Naive thymus-derived CD4-positive, alpha-beta T cell (primary cell): ENCODE measurements at regions of chr17 and their contacts with region 1.

Region 1: DNA sequence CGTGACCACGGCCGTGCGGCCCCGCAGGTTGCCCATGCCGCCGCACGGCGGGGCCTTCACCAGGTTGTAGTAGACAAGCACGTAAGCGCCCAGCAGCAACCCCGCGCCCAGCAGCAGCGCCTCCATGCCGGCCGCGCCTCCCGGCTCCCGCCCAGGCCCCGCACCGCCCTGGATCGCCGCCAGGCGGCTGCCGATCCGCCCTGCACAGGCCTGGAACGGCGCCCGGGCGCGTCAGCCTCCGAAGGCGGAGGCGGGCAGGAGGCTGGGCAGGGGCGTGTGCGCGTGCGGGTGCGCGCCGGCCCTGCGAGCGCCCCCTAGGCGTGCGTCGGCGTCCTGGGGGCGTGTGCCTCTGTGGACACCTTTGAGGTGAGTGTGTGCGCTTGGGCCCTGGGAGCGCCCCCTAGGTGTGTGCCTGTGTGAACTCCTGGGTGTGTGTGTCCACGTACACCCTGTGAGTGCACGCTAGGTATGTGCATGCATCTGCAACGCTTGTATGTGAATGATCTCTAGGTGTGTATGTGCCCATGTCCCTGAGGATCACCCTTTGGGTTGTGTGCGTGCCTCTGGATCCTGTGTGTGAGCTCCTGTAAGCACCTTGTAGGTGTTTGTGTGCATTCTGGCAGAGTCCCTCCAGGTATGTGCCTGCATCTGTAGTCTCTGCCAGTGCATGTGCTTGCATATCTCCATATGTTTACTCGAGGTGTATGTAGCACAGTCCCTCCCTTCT is at the start of gene DHRS13:
- DNase-seq: peak; percentile 92 to 99 (median 96)
- ATAC-seq: peak; percentile 96
- H3K4me3 ChIP-seq: peak within 1 kb of the TSS; percentile 77
- H3K4me3 Mint-ChIP-seq: peak within 1 kb of the TSS; percentile 85 to 98 (median 94)
- H3K27ac ChIP-seq: peak within 1 kb of the TSS; percentile 87
- H3K27ac Mint-ChIP-seq: peak within 1 kb of the TSS; percentile 81 to 96 (median 90)
- H3K4me1 ChIP-seq: peaks cover 18 to 29% of the 10 kb centered on the region in 2 donors
- H3K4me1 Mint-ChIP-seq: peaks cover 13 to 53% (median 36%) of the 10 kb centered on the region in 7 donors
- H3K27me3 ChIP-seq: no peaks in the 10 kb centered on the region
- H3K27me3 Mint-ChIP-seq: no peaks in the 10 kb centered on the region
- total RNA-seq, gene DHRS13: 20.0 to 51.3 (median 30.4) TPM

Region 2: GRCh38 chr17:28634206-28634856 is 268.7 kb before region 1 on chr17:
- CTCF ChIA-PET with region 1: no interaction called
- POLR2A ChIA-PET with region 1: no interaction called
- intact Hi-C with region 1: no loop called
- DNase-seq: no peak
- ATAC-seq: no peak
- H3K4me3 ChIP-seq: no peak overlapping the region
- H3K4me3 Mint-ChIP-seq: no peak overlapping the region
- H3K27ac ChIP-seq: no peak overlapping the region
- H3K27ac Mint-ChIP-seq: peak overlapping the region in 2 of 9 donors; percentile 25 to 34
- H3K4me1 ChIP-seq: no peaks in the 10 kb centered on the region
- H3K4me1 Mint-ChIP-seq: peaks cover 15 to 44% (median 33%) of the 10 kb centered on the region in 7 donors
- H3K27me3 ChIP-seq: no peaks in the 10 kb centered on the region
- H3K27me3 Mint-ChIP-seq: no peaks in the 10 kb centered on the region

Region 3: DNA sequence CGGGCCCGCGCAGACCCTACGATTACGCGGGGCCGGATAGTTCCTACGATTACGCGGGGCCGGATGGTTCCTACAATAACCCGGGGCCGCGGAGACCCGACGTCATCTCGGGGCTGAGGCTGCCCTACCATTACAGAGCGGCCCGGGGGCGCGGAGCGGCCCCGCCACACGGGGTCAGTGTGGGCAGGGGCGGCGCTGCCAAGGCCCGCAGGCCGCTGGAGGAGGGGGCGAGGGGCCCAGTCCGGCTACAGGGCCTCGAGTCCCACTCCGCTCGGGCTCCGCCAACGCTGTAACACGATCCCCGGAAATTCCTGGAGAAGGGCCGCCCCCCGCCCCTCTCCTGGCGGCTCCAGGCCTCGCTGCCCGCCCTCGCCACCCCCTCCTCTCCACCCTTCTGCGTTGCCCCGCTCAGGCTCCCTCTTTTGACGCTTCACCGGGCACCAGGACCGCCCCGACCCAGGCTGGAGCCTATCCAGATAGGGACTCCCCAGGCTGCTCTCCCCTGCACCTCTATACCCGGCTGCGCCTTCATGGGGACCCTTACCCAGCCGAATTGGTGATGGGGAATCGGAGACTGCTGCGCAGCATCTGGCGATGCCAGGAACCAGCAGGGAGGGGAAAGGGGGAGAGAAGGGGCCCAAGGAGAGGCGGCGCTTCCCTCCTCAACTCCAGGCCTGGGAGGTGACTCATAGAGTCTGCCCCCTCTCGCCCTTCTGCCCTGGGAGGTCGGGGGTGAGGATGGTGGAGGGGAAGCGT is 185.2 kb before region 1 on chr17 and contains the start of gene RAB34:
- CTCF ChIA-PET with region 1: no interaction called
- POLR2A ChIA-PET with region 1: interaction called, 8 read pairs
- intact Hi-C with region 1: loop called in 1 of 2 experiments (anchors 2 kb)
- DNase-seq: peak in 2 of 9 donors; percentile 18 to 21
- ATAC-seq: no peak
- H3K4me3 ChIP-seq: no peak within 1 kb of the TSS
- H3K4me3 Mint-ChIP-seq: peak within 1 kb of the TSS; percentile 58 to 99 (median 76)
- H3K27ac ChIP-seq: peak within 1 kb of the TSS; percentile 52
- H3K27ac Mint-ChIP-seq: peak within 1 kb of the TSS; percentile 59 to 97 (median 85)
- H3K4me1 ChIP-seq: peaks cover 26 to 30% of the 10 kb centered on the region in 2 donors
- H3K4me1 Mint-ChIP-seq: peaks cover 17 to 57% (median 35%) of the 10 kb centered on the region in 7 donors
- H3K27me3 ChIP-seq: no peaks in the 10 kb centered on the region
- H3K27me3 Mint-ChIP-seq: peaks cover 0 to 24% (median 6%) of the 10 kb centered on the region in 5 donors
- total RNA-seq, gene RAB34: 11.0 to 50.2 (median 16.4) TPM

Region 4: DNA sequence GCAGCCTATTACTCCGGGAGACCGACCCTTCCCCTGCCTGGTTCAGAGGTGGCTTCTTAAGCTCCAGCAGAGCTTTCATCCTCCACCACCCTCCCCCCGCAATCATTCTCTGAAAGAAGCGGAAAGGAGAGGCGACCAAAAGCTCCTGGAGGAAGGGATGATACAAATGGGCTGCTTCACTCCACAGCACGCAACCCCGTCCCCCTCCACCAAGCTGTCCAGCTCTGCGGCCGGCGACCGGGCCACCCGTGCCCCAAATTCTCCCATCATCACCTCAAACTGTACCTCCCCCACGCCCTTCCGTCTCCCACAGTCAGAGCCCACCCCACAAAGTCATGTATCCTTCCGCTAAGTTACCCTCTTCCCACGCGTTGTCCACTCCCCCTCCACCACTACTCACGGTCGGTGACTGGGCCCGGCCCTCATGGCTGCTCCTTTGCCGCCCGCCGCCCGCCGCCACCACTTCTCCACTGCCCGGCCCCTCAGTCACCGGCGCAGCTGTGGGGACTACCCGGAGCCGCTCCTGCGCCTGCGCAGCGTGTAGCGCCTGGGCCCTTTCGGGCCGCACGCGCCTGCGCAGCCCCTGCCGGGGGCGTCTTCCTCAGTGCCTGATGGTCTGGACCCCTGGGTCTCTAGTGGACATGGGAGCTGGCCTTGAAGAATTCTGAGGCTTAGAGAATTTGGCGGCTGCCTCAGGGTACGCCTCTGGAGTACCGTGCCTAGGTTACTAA is 60.5 kb before region 1 on chr17 and contains the start of gene FAM222B:
- CTCF ChIA-PET with region 1: interaction called, 5 read pairs
- POLR2A ChIA-PET with region 1: interaction called, 22 read pairs
- intact Hi-C with region 1: loop called in 1 of 2 experiments (anchors 1 kb)
- DNase-seq: peak; percentile 80 to 91 (median 86)
- ATAC-seq: peak; percentile 98
- H3K4me3 ChIP-seq: peak within 1 kb of the TSS; percentile 77
- H3K4me3 Mint-ChIP-seq: peak within 1 kb of the TSS; percentile 96 to 100 (median 98)
- H3K27ac ChIP-seq: peak within 1 kb of the TSS; percentile 78
- H3K27ac Mint-ChIP-seq: peak within 1 kb of the TSS; percentile 83 to 97 (median 92)
- H3K4me1 ChIP-seq: peaks cover 8 to 13% of the 10 kb centered on the region in 2 donors
- H3K4me1 Mint-ChIP-seq: peaks cover 6 to 31% (median 26%) of the 10 kb centered on the region in 7 donors
- H3K27me3 ChIP-seq: no peaks in the 10 kb centered on the region
- H3K27me3 Mint-ChIP-seq: no peaks in the 10 kb centered on the region
- total RNA-seq, gene FAM222B: 16.5 to 24.4 (median 22.3) TPM

Region 5: GRCh38 chr17:28854457-28855350 is 48.3 kb before region 1 on chr17 and contains the start of gene ERAL1:
- CTCF ChIA-PET with region 1: interaction called, 10 read pairs
- POLR2A ChIA-PET with region 1: interaction called, 19 read pairs
- intact Hi-C with region 1: loop called (anchors 1 kb)
- DNase-seq: peak; percentile 63 to 87 (median 83)
- ATAC-seq: peak; percentile 100
- H3K4me3 ChIP-seq: peak within 1 kb of the TSS; percentile 86
- H3K4me3 Mint-ChIP-seq: peak within 1 kb of the TSS; percentile 90 to 100 (median 94)
- H3K27ac ChIP-seq: peak within 1 kb of the TSS; percentile 82
- H3K27ac Mint-ChIP-seq: peak within 1 kb of the TSS; percentile 85 to 94 (median 90)
- H3K4me1 ChIP-seq: peaks cover 7 to 12% of the 10 kb centered on the region in 2 donors
- H3K4me1 Mint-ChIP-seq: peaks cover 0 to 27% (median 11%) of the 10 kb centered on the region in 7 donors
- H3K27me3 ChIP-seq: no peaks in the 10 kb centered on the region
- H3K27me3 Mint-ChIP-seq: no peaks in the 10 kb centered on the region
- total RNA-seq, gene ERAL1: 19.8 to 50.0 (median 24.9) TPM

Region 6: GRCh38 chr17:28916302-28916934 is 13.4 kb after region 1 on chr17:
- CTCF ChIA-PET with region 1: interaction called, 3 read pairs
- POLR2A ChIA-PET with region 1: no interaction called
- intact Hi-C with region 1: loop called in 1 of 2 experiments (anchors 1 kb)
- DNase-seq: peak in 6 of 9 donors; percentile 38 to 50 (median 42)
- ATAC-seq: peak; percentile 90
- H3K4me3 ChIP-seq: no peak overlapping the region
- H3K4me3 Mint-ChIP-seq: no peak overlapping the region
- H3K27ac ChIP-seq: peak overlapping the region; percentile 46
- H3K27ac Mint-ChIP-seq: peak overlapping the region in 7 of 9 donors; percentile 46 to 93 (median 65)
- H3K4me1 ChIP-seq: no peaks in the 10 kb centered on the region
- H3K4me1 Mint-ChIP-seq: peaks cover 0 to 9% (median 6%) of the 10 kb centered on the region in 7 donors
- H3K27me3 ChIP-seq: no peaks in the 10 kb centered on the region
- H3K27me3 Mint-ChIP-seq: no peaks in the 10 kb centered on the region

Region 7: DNA sequence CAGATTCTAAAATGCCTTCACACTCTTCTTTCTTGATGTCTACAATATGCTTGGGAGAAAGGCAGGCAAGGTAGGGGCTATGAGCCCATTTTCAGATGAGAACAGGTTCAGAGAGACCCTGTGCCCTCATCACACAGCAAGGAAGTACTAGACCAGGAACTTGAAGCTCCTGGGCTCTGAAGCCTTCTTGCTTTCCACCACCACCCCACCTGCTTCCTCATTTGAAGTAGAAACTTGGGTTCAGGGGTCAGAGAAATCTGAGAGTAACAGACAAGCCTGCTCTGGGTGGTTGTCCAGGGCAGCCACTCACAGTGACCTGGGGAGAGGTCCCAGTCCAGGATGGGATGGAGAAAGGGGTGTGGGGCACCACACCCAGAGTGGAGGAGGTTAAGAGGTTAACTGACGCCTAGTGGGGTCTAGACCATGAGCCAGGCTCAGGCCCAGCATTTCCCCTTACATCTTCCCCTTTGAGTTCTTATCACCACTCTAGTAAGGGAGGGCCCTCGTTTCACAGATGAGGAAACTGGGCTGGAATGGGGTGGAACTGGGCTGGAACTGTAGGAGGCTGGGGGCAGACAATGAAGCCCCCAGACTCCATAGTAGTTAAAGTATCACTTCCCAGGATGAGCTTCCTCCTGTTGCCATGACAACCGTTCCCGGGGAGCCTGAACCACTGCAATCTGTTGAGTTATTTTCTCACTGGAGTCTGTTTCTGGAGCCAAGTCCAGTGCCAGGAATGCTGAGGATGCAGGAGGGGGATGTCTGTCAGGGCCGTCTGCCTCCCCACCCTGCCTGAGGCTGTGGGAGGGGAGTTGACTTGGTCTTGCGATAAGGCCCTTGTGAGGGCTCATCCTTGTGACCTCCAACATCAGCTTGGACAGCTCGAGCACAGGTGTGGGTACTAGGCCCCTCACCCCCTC is 64.5 kb after region 1 on chr17:
- CTCF ChIA-PET with region 1: no interaction called
- POLR2A ChIA-PET with region 1: no interaction called
- intact Hi-C with region 1: no loop called
- DNase-seq: no peak
- ATAC-seq: peak; percentile 71
- H3K4me3 ChIP-seq: no peak overlapping the region
- H3K4me3 Mint-ChIP-seq: no peak overlapping the region
- H3K27ac ChIP-seq: no peak overlapping the region
- H3K27ac Mint-ChIP-seq: peak overlapping the region in 1 of 9 donors; percentile 14
- H3K4me1 ChIP-seq: no peaks in the 10 kb centered on the region
- H3K4me1 Mint-ChIP-seq: peaks cover 0 to 6% (median 0%) of the 10 kb centered on the region in 7 donors
- H3K27me3 ChIP-seq: no peaks in the 10 kb centered on the region
- H3K27me3 Mint-ChIP-seq: peaks cover 4 to 11% (median 9%) of the 10 kb centered on the region in 5 donors

Region 8: GRCh38 chr17:29024316-29024952 is 121.5 kb after region 1 on chr17:
- CTCF ChIA-PET with region 1: no interaction called
- POLR2A ChIA-PET with region 1: no interaction called
- intact Hi-C with region 1: no loop called
- DNase-seq: no peak
- ATAC-seq: no peak
- H3K4me3 ChIP-seq: no peak overlapping the region
- H3K4me3 Mint-ChIP-seq: no peak overlapping the region
- H3K27ac ChIP-seq: no peak overlapping the region
- H3K27ac Mint-ChIP-seq: no peak overlapping the region
- H3K4me1 ChIP-seq: peaks cover 2 to 6% of the 10 kb centered on the region in 2 donors
- H3K4me1 Mint-ChIP-seq: peaks cover 0 to 10% (median 2%) of the 10 kb centered on the region in 7 donors
- H3K27me3 ChIP-seq: peaks cover 4 to 10% of the 10 kb centered on the region in 2 donors
- H3K27me3 Mint-ChIP-seq: peaks cover 28 to 60% (median 46%) of the 10 kb centered on the region in 5 donors

Region 9: DNA sequence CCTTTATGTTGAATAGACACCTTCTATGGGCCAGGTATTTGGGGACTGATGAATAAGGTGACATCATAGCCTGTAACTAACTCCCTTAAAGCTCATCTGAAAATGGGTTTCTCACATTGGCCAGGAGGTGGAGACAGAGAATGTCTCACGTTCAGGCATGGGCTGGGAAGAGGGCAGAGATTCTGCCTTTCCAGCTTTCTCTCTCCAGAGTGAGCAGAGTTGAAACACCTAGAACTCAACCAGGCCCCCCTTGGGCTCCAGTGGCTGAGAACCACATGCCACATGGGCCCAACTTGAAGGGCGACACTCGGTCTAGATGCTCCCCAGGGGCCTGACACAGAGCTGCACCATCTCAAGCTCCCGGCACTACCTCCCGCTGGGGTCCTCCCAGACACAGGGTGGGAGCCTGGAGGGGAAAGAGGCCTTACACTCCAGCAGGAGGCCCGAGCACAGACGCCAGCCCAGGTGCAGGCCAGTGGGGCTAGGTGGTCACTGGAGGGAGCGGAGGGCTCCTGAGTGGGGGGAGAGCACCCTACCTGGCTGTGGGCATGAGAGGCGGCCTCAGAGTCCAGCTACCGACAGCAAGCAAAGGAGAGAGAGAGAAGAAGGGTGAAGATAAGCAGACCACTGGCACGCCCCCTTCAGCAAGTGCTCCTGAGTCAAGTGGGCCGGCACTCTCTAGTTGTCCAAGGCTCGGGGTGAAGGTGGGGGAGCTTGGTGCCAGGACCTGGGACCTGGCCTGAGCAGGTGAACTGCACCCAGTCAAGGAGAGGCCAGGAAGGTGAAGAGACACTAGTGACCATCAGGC is 221.3 kb after region 1 on chr17:
- CTCF ChIA-PET with region 1: interaction called, 11 read pairs
- POLR2A ChIA-PET with region 1: no interaction called
- intact Hi-C with region 1: no loop called
- DNase-seq: peak in 6 of 9 donors; percentile 34 to 59 (median 48)
- ATAC-seq: peak; percentile 87
- H3K4me3 ChIP-seq: no peak overlapping the region
- H3K4me3 Mint-ChIP-seq: no peak overlapping the region
- H3K27ac ChIP-seq: no peak overlapping the region
- H3K27ac Mint-ChIP-seq: peak overlapping the region in 2 of 9 donors; percentile 54 to 55
- H3K4me1 ChIP-seq: no peaks in the 10 kb centered on the region
- H3K4me1 Mint-ChIP-seq: peaks cover 0 to 16% (median 5%) of the 10 kb centered on the region in 7 donors
- H3K27me3 ChIP-seq: no peaks in the 10 kb centered on the region
- H3K27me3 Mint-ChIP-seq: no peaks in the 10 kb centered on the region